ENCODE measurements at regions of chr11 and their contacts with region 1.

Region 1: DNA sequence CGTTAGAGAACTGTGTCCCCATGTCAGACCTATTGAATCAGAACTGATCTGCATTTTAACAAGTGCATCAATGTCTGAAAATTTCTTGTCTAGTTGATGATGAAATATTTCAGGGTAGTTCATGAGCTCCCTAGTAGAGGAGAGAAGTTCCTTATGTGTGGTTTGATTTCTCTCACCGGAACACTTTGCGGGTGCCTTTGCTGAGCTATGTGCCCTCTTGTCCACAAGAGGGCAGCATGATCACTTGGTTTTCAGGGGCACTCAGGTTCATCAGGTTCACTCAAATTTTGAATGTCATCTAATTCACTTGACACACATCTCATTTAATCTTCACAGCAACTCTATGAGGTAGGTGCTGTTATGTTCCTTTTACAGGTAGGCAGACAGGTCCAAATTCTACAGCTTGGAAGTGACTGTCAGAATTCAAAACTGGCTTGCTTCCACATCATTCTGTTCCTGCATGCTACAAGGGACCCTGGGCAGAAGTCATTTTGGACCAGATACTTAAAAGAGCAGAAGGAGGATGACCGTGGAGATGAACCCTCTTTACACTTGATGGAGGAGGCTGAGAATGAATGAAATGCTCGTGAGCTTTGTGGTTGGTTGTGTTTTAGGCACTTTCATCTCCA is 55.6 kb downstream of the P4HA3 start:
- DNase-seq: peak in 5 of 6 donors; percentile 24 to 67 (median 37)
- ATAC-seq: peak; percentile 67 to 91 (median 86)
- H3K4me3 ChIP-seq: no peak overlapping the region
- H3K27ac ChIP-seq: no peak overlapping the region
- H3K4me1 ChIP-seq: no peaks in the 10 kb centered on the region
- H3K27me3 ChIP-seq: no peaks in the 10 kb centered on the region
- CTCF ChIP-seq: peak; percentile 79 to 88 (median 86)

Region 2: DNA sequence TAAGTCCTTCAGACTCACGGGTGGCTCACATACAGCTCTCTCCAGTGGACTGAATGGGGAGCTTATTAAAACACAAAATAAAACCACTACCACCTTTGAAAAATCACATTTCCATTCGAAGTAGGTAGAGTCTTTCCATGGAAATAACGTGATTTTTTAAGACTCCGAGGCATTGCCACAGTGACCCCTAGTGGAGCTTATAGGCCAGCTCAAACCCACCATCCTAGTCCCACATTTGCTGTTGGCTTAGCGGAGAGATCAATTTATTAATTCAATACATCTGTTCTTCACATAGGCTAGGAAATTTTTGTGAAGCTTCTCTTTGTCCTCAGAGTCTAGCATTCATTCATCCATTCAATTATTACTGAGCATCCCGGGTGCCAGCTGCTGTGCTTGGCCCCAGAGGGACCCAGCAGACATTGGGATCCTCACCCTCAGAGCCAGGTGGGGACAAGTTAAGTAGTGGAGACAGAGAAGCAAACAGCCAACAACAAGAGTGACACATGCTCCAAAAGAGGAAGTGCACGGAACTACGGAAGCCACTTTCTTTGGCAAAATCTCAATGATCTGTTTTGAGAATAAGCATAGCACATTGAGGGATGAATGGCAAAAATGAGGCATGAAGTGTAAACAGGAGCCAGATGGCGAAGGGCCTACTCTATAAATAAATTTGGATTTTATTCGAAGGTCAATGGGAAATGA is 65.8 kb after region 1 on chr11:
- intact Hi-C with region 1: loop called in 1 of 3 experiments (anchors 10 kb)
- DNase-seq: peak in 1 of 6 donors; percentile 21
- ATAC-seq: peak in 1 of 4 donors; percentile 27
- H3K4me3 ChIP-seq: no peak overlapping the region
- H3K27ac ChIP-seq: no peak overlapping the region
- H3K4me1 ChIP-seq: peaks cover 7 to 14% (median 8%) of the 10 kb centered on the region in 3 donors
- H3K27me3 ChIP-seq: no peaks in the 10 kb centered on the region
- CTCF ChIP-seq: peak; percentile 16 to 35 (median 26)

Region 3: DNA sequence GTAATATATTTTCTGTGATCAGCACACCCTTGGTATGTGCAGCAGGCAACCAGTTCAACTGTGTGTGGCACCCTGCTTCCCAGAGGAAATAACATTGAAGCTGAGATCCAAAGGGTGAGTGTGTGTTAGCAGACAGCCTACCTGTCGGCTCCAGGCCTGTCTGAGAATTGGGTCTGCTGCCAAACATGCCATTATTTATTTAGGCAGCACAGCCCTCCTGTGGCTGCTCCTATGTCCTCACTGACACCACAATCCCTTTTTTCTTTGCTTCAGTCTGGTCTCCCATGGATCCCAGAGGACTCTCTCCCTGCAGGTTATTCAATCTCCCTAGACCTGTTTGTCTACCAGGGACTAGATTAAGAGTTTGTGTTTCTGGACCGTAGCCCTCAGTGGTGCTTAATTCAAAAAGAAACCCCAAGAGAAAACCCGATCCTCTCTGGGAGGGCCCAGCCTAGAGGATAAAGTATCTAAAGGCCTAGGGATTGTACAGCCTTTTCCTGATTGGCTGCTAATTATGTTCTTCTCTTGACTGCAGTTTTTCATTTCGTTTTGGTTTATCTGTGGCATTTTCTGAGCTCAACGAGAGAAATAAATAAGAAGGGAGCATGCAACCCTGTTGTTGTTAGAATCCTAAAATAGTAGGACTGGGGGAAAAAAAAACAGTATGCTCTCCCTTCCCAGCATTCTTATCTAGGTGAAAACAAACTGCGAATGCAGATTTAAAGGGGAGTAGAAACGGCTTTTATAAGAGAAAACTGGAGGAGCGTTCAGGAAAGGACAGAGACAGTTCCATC is 187.4 kb after region 1 on chr11:
- intact Hi-C with region 1: loop called in 2 of 3 experiments (anchors 5 kb)
- DNase-seq: peak in 5 of 6 donors; percentile 61 to 81 (median 73)
- ATAC-seq: peak; percentile 92 to 95 (median 93)
- H3K4me3 ChIP-seq: no peak overlapping the region
- H3K27ac ChIP-seq: peak overlapping the region; percentile 19 to 72 (median 46)
- H3K4me1 ChIP-seq: peaks cover 18 to 28% (median 24%) of the 10 kb centered on the region in 3 donors
- H3K27me3 ChIP-seq: no peaks in the 10 kb centered on the region
- CTCF ChIP-seq: peak in 1 of 4 donors; percentile 21

Region 4: GRCh38 chr11:74449369-74449931 is 193.6 kb after region 1 on chr11:
- intact Hi-C with region 1: loop called in 2 of 3 experiments (anchors 5 kb)
- DNase-seq: peak in 3 of 6 donors; percentile 46 to 67 (median 57)
- ATAC-seq: peak; percentile 67 to 87 (median 77)
- H3K4me3 ChIP-seq: no peak overlapping the region
- H3K27ac ChIP-seq: no peak overlapping the region
- H3K4me1 ChIP-seq: peaks cover 3 to 8% (median 5%) of the 10 kb centered on the region in 3 donors
- H3K27me3 ChIP-seq: no peaks in the 10 kb centered on the region
- CTCF ChIP-seq: peak; percentile 31 to 56 (median 48)

Region 5: DNA sequence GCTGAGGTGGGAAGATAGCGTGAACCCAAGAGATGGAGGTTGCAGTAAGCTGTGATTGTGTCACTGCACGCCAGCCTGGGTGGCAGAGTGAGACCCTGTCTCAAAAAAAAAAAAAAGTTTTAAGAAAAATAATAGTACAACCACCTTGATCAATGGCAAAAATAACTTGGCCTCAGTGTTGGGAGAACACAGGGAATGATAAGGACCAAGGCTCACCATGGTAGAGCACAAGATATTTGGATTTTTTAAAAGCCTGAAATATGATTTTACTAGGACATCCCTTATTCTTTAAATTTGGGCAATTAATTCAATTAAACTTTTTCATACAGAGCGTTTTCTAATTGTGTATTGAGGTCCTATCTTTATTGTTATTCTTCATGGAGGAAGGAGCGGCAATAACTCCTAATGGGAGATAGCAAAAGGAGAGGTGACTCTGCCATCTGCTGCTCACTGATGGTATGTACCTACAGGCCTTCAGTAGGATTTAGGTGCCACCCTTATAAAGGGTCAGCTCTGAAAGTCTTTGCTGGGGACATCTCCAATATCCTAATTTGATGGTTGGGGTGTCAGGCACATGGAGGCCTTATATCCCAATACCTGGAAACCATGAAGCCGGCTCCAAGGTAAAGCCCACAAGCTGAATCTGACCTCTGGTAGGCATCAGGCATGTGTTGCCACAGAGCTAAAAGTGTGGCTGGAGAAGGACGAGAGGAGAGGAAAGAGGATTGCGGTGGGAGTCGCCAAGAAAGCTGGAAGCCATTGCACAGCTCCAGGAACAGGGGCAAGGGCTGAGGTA is 314.6 kb after region 1 on chr11:
- intact Hi-C with region 1: loop called in 1 of 3 experiments (anchors 10 kb)
- DNase-seq: peak in 2 of 6 donors; percentile 47 to 64
- ATAC-seq: peak; percentile 86 to 94 (median 92)
- H3K4me3 ChIP-seq: no peak overlapping the region
- H3K27ac ChIP-seq: peak overlapping the region; percentile 33 to 46 (median 38)
- H3K4me1 ChIP-seq: peaks cover 15 to 34% (median 29%) of the 10 kb centered on the region in 3 donors
- H3K27me3 ChIP-seq: no peaks in the 10 kb centered on the region
- CTCF ChIP-seq: peak; percentile 30 to 62 (median 56)